H1 (cell line): ENCODE measurements at regions of chr1 and their contacts with region 1.

Region 1: DNA sequence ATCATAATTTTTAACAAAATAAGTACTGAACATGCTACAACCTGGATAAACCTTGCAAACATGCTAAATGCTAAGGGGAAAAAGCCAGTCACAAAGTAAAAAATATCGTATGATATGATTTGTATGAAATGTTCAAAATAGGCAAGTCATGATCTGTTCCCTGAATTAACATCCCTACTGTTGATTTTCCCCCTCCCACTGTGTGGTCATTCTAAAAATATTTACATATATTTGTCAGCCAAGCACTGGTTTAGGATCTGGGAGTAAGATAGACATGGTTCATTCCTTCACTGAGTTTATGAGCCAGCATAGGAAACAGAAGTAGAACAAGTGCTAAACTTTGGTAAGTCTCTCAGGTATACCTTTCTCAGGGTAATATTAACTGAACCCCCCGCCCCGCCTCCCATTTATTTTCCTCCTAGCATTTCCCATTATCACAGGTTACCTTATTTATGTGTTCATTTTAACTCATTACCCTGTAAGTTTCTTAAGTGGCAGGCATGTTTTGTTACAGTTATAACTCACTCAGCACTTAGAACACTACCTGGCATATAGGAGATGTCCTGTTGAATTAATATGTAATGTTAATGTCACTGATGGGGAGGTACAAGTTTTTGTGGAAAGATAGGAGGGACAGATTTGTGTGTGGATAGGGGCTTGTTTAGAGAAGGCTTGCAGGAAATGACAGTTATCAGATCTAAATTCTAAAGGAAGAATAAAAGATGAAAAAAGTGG is 12.3 kb downstream of the UQCRH start:
- DNase-seq: no peak
- H3K4me3 ChIP-seq: no peak overlapping the region
- H3K27ac ChIP-seq: no peak overlapping the region
- H3K4me1 ChIP-seq: no peaks in the 10 kb centered on the region
- H3K27me3 ChIP-seq: no peaks in the 10 kb centered on the region
- CTCF ChIP-seq: no peak
- EP300 ChIP-seq: no peak
- POLR2A ChIP-seq: peak in 1 of 2 experiments; percentile 30; a peak in 1 of 3 replicates
- RAD21 ChIP-seq: no peak

Region 2: GRCh38 chr1:46333300-46334029 is 17.6 kb after region 1 on chr1:
- CTCF ChIA-PET with region 1: interaction called, 4 read pairs
- POLR2A ChIA-PET with region 1: interaction called, 34 read pairs
- DNase-seq: peak in 1 of 2 experiments; percentile 34
- H3K4me3 ChIP-seq: no peak overlapping the region
- H3K27ac ChIP-seq: no peak overlapping the region
- H3K4me1 ChIP-seq: peaks cover 0 to 3% (median 0%) of the 10 kb centered on the region in 4 experiments; a peak in 1 of 7 replicates
- H3K27me3 ChIP-seq: no peaks in the 10 kb centered on the region
- CTCF ChIP-seq: peak in 2 of 3 experiments; percentile 50 to 55; a peak in 3 of 4 replicates
- EP300 ChIP-seq: no peak
- POLR2A ChIP-seq: no peak
- RAD21 ChIP-seq: peak; percentile 56 to 65

Region 3: GRCh38 chr1:46340404-46341221 is 24.8 kb after region 1 on chr1 and contains the start of gene NSUN4:
- CTCF ChIA-PET with region 1: interaction called, 16 read pairs
- POLR2A ChIA-PET with region 1: interaction called, 25 read pairs
- DNase-seq: peak; percentile 66 to 79
- H3K4me3 ChIP-seq: peak within 1 kb of the TSS; percentile 72 to 91 (median 86)
- H3K27ac ChIP-seq: peak within 1 kb of the TSS; percentile 83
- H3K4me1 ChIP-seq: peaks cover 0 to 7% (median 4%) of the 10 kb centered on the region in 4 experiments; a peak in 4 of 7 replicates
- H3K27me3 ChIP-seq: no peaks in the 10 kb centered on the region
- CTCF ChIP-seq: peak; percentile 65 to 72 (median 69)
- EP300 ChIP-seq: 0 out of 3 replicates have a peak, but pooled peaks of 1 of the 2 experiments have one; percentile 48
- POLR2A ChIP-seq: peak; percentile 69 to 74
- RAD21 ChIP-seq: peak; percentile 21 to 25; a peak in 3 of 4 replicates
- total RNA-seq, gene NSUN4: 13.7 and 15.7 TPM in 2 replicates

Region 4: GRCh38 chr1:46653405-46653958 is 337.6 kb after region 1 on chr1:
- CTCF ChIA-PET with region 1: no interaction called
- POLR2A ChIA-PET with region 1: no interaction called
- DNase-seq: no peak
- H3K4me3 ChIP-seq: no peak overlapping the region
- H3K27ac ChIP-seq: no peak overlapping the region
- H3K4me1 ChIP-seq: no peaks in the 10 kb centered on the region
- H3K27me3 ChIP-seq: no peaks in the 10 kb centered on the region
- CTCF ChIP-seq: no peak
- EP300 ChIP-seq: no peak
- POLR2A ChIP-seq: no peak
- RAD21 ChIP-seq: no peak